ENCODE measurements at regions of chr3 and their contacts with region 1.

Region 1: DNA sequence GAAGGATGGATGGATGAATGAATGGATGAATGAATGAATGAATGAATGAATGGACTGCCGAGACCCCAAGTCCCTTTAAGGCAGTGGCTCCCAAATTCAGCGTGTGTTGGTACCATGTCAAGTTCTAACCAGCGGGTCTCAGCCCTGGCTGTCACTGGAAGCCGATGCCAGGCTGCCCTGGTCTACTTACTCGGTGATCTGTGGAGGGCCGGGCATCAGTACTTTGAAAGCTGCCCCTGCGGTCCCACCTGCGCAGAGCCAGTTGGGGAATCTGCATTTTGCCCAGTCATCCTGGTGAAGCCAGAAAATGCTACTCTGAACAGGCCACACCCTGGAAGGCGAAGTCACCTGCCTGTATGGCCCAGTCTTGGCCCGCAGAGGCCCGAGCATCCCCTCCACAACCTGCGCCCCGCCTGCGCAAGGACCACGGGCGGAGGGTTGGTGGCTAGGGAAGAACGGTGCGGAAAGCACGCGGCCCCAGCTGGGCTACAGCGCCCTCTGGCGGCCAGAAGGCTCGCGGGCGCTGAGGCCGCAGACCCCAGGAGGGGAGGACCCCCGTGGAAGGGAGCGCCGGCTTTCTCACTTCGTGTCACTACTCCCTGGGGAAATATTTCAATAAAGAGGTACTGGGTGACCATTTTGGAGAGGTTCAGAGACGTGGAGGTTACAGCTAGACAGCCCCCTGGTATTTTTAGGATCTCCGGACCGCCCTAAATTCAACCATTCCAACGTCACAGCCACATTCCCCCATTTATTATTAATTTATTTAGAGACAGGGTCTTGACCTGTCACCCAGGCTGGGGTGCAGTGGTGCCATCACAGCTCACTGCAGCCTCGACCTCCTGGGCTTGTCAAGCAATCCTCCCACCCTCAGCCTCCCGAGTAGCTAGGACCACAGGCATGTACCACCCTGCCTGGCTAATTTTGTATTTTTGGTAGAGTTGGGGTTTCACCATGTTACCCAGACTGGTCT is 34.9 kb downstream of the PRKCD start:
- DNase-seq: peak; percentile 94
- H3K4me3 ChIP-seq: peak overlapping the region in 1 of 2 experiments; percentile 24; a peak in 1 of 4 replicates
- H3K27ac ChIP-seq: no peak overlapping the region
- H3K4me1 ChIP-seq: peaks cover 0 to 9% of the 10 kb centered on the region in 2 experiments; a peak in 1 of 4 replicates
- H3K27me3 ChIP-seq: no peaks in the 10 kb centered on the region
- CTCF ChIP-seq: peak; percentile 99
- EP300 ChIP-seq: no peak
- RAD21 ChIP-seq: peak; percentile 86

Region 2: DNA sequence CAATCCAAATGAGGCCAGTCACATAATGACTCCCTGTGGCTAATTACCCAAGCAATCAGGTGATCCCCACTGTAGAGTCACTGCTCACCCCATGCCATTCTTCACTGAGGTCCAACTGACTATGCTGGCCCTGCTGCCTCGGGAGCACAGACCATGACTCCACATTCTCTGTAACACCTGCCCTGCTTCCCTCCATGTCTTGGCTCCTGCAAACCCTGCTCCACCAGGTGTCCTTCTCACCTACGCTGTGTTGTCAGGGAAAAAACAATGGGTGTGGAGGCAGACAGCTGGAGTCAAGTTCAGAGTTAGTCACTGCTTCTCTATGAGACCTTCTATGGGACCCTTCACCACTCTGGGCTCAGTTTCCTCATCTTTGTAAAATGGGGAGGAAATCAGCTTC is 143.9 kb before region 1 on chr3:
- CTCF ChIA-PET with region 1: no interaction called
- POLR2A ChIA-PET with region 1: no interaction called
- DNase-seq: no peak
- H3K4me3 ChIP-seq: no peak overlapping the region
- H3K27ac ChIP-seq: no peak overlapping the region
- H3K4me1 ChIP-seq: no peaks in the 10 kb centered on the region
- H3K27me3 ChIP-seq: no peaks in the 10 kb centered on the region
- CTCF ChIP-seq: no peak
- EP300 ChIP-seq: no peak
- RAD21 ChIP-seq: no peak

Region 3: DNA sequence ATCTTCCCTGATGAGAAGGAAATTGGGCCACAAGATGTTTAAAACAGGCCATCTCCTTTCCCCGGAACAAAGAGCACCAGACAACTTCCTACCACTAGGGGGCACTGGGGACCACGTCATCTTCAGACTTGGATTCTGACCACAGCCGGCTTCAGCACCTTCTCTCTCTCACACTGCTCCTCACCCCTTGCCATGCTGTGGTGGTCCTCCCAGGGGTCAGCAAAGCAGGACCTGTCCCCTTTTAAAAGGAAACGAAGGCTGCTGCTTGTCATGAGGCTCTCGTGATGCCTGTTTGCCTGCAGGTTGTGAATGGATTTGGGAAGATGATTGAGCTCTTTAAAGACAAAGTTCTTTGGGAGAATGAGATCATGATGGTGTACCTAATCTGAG is 81.9 kb before region 1 on chr3:
- CTCF ChIA-PET with region 1: interaction called, 206 read pairs
- POLR2A ChIA-PET with region 1: interaction called, 6 read pairs
- DNase-seq: peak; percentile 78
- H3K4me3 ChIP-seq: no peak overlapping the region
- H3K27ac ChIP-seq: peak overlapping the region; percentile 33 to 61
- H3K4me1 ChIP-seq: peaks cover 0 to 13% of the 10 kb centered on the region in 2 experiments; a peak in 1 of 4 replicates
- H3K27me3 ChIP-seq: no peaks in the 10 kb centered on the region
- CTCF ChIP-seq: peak; percentile 92
- EP300 ChIP-seq: no peak
- RAD21 ChIP-seq: peak; percentile 89

Region 4: DNA sequence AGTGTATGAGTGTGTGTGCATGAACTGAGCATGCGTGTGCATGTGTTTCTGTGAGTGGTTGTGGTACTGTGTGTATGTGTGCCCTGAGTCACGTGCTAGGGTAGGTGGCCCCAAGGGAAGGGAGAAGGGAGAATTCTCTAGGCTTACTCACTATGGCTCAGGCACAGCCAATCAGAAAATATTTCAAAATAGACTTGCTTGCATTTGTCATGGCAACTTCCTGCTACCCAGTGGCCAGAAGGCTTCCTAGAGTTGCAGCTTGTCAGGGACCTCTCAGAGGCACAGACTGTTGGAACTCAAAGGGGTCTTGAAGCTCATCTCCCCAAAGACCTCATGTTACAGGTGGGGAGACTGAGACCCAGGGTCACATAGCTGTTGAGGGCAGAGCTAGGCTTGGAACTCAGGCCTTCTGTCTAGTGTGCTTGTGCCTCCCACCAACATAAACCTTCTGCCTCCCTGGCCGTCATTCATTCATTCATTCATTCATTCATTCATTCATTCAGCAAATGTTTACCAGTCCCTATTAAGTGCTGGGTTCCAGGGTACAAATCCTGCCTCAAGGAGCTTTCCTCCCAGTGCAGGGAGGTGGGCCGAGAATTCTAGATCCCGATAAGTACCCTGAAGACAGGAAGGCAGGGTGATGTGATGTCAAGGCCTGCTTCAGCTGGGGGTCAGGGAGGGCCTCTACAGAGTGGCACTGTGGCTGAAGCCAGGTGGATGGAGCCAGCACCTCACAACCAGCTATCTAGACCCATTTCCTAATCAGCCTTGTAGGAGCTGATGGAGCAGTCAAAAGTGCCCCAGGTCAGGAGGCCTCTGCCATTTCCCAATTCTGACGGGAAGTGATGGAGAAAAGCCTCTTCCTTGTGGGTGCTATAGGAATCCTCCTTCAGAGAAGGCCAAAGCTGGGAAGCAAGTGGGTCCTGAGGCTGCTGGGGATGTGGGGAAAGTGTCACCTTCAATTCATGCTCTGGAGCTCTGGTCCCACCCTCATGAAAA is 54.7 kb before region 1 on chr3:
- CTCF ChIA-PET with region 1: interaction called, 115 read pairs
- POLR2A ChIA-PET with region 1: no interaction called
- DNase-seq: no peak
- H3K4me3 ChIP-seq: no peak overlapping the region
- H3K27ac ChIP-seq: no peak overlapping the region
- H3K4me1 ChIP-seq: no peaks in the 10 kb centered on the region; a peak in 1 of 4 replicates
- H3K27me3 ChIP-seq: no peaks in the 10 kb centered on the region
- CTCF ChIP-seq: no peak
- EP300 ChIP-seq: no peak
- RAD21 ChIP-seq: no peak

Region 5: GRCh38 chr3:53163444-53164387 is 32.2 kb before region 1 on chr3:
- CTCF ChIA-PET with region 1: interaction called, 23 read pairs
- POLR2A ChIA-PET with region 1: no interaction called
- DNase-seq: no peak
- H3K4me3 ChIP-seq: no peak overlapping the region
- H3K27ac ChIP-seq: no peak overlapping the region
- H3K4me1 ChIP-seq: peaks cover 6 to 32% of the 10 kb centered on the region in 2 experiments; a peak in 2 of 4 replicates
- H3K27me3 ChIP-seq: no peaks in the 10 kb centered on the region
- CTCF ChIP-seq: no peak
- EP300 ChIP-seq: no peak
- RAD21 ChIP-seq: no peak

Region 6: GRCh38 chr3:53219895-53220483 is 24.1 kb after region 1 on chr3:
- CTCF ChIA-PET with region 1: interaction called, 18 read pairs
- POLR2A ChIA-PET with region 1: no interaction called
- DNase-seq: peak; percentile 91
- H3K4me3 ChIP-seq: no peak overlapping the region; a peak in 1 of 4 replicates
- H3K27ac ChIP-seq: no peak overlapping the region
- H3K4me1 ChIP-seq: no peaks in the 10 kb centered on the region
- H3K27me3 ChIP-seq: no peaks in the 10 kb centered on the region
- CTCF ChIP-seq: peak; percentile 94
- EP300 ChIP-seq: no peak
- RAD21 ChIP-seq: peak; percentile 84